Gastrocnemius medialis (tissue), 4 donors: ENCODE measurements at regions of chrX and their contacts with region 1.

Region 1: GRCh38 chrX:81377329-81377728 is 175.4 kb downstream of the SH3BGRL start:
- DNase-seq: no peak
- ATAC-seq: no peak
- H3K4me3 ChIP-seq: no peak overlapping the region
- H3K27ac ChIP-seq: no peak overlapping the region
- H3K4me1 ChIP-seq: no peaks in the 10 kb centered on the region
- H3K27me3 ChIP-seq: peaks cover 0 to 4% (median 0%) of the 10 kb centered on the region in 3 donors
- CTCF ChIP-seq: peak in 2 of 5 experiments; percentile 20 to 46
- POLR2A ChIP-seq: no peak

Region 2: GRCh38 chrX:81195712-81196111 is 181.6 kb before region 1 on chrX:
- in situ Hi-C with region 1: loop called in 1 of 4 experiments (anchors 25 kb)
- intact Hi-C with region 1: no loop called
- DNase-seq: peak in 1 of 2 donors; percentile 9
- ATAC-seq: no peak
- H3K4me3 ChIP-seq: no peak overlapping the region
- H3K27ac ChIP-seq: no peak overlapping the region
- H3K4me1 ChIP-seq: no peaks in the 10 kb centered on the region
- H3K27me3 ChIP-seq: no peaks in the 10 kb centered on the region
- CTCF ChIP-seq: peak in 4 of 5 experiments; percentile 32 to 53 (median 38)
- POLR2A ChIP-seq: no peak